ENCODE measurements at regions of chr16 and their contacts with region 1.

Region 1: GRCh38 chr16:78836802-78837491 is 737.5 kb downstream of the WWOX start:
- DNase-seq: no peak
- H3K4me3 Mint-ChIP-seq: peak overlapping the region; percentile 13
- H3K27ac Mint-ChIP-seq: peak overlapping the region; percentile 86
- H3K4me1 Mint-ChIP-seq: peaks cover 11% of the 10 kb centered on the region
- H3K27me3 Mint-ChIP-seq: no peaks in the 10 kb centered on the region

Region 2: DNA sequence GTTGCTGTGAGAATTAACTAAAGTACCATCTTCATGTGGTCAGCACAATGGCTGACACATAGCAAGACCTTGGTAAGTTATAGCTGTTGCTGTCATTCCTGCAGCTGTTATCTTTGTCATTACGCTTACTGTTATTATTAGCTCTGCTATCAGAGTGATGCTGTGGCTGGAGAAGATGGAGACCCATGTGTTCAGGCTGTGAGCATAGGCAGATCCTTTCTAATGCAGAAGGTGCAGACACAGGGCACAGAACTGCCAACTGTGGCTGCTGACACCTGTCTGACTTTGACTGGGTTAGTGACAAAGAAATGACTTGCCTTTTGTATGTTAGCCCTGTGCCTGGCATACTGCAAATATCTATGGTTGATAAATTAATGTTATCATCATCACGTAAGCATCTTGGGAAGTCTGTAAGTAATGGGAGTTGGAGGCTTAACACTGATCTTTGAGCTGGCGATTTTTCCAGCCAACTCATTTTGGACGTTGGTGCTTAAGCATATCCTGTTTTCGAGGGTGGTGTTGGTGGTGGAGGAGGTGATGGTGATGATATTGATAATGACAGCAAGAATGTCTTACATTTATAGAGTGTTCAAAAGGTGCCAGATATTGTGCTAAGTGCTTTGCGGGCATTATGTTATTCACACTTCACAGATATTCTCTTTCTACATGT is 42.2 kb before region 1 on chr16:
- intact Hi-C with region 1: loop called (anchors 1 kb)
- DNase-seq: no peak
- H3K4me3 Mint-ChIP-seq: no peak overlapping the region
- H3K27ac Mint-ChIP-seq: peak overlapping the region; percentile 69
- H3K4me1 Mint-ChIP-seq: peaks cover 33% of the 10 kb centered on the region
- H3K27me3 Mint-ChIP-seq: no peaks in the 10 kb centered on the region

Region 3: DNA sequence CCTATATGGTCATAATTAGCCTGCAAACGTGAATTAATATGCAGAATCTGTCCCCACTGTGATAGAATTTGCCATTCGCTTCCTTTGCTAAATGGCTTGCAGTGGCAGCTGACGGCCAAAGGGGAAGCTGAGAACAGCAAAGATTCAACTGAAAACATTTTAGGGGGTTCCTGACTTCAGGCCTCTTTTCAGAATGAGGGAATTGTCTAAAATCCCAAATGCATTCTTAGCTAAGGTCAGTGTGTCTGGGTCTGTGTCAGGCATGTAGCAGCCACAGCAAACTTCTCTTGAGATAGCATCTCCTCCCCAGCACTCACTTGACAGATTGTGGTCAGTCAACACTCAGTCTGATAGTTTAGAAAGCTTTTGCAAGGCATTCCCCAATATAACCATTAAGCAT is 36.4 kb before region 1 on chr16:
- intact Hi-C with region 1: loop called (anchors 5 kb)
- DNase-seq: no peak
- H3K4me3 Mint-ChIP-seq: no peak overlapping the region
- H3K27ac Mint-ChIP-seq: no peak overlapping the region
- H3K4me1 Mint-ChIP-seq: peaks cover 23% of the 10 kb centered on the region
- H3K27me3 Mint-ChIP-seq: peaks cover 1% of the 10 kb centered on the region

Region 4: GRCh38 chr16:78816499-78817195 is 20.3 kb before region 1 on chr16:
- intact Hi-C with region 1: no loop called
- DNase-seq: no peak
- H3K4me3 Mint-ChIP-seq: no peak overlapping the region
- H3K27ac Mint-ChIP-seq: no peak overlapping the region
- H3K4me1 Mint-ChIP-seq: no peaks in the 10 kb centered on the region
- H3K27me3 Mint-ChIP-seq: no peaks in the 10 kb centered on the region

Region 5: GRCh38 chr16:78892951-78893733 is 56.2 kb after region 1 on chr16:
- intact Hi-C with region 1: loop called (anchors 5 kb)
- DNase-seq: no peak
- H3K4me3 Mint-ChIP-seq: no peak overlapping the region
- H3K27ac Mint-ChIP-seq: peak overlapping the region; percentile 34
- H3K4me1 Mint-ChIP-seq: peaks cover 27% of the 10 kb centered on the region
- H3K27me3 Mint-ChIP-seq: no peaks in the 10 kb centered on the region